ENCODE measurements at regions of chr2 and their contacts with region 1.

Region 1: DNA sequence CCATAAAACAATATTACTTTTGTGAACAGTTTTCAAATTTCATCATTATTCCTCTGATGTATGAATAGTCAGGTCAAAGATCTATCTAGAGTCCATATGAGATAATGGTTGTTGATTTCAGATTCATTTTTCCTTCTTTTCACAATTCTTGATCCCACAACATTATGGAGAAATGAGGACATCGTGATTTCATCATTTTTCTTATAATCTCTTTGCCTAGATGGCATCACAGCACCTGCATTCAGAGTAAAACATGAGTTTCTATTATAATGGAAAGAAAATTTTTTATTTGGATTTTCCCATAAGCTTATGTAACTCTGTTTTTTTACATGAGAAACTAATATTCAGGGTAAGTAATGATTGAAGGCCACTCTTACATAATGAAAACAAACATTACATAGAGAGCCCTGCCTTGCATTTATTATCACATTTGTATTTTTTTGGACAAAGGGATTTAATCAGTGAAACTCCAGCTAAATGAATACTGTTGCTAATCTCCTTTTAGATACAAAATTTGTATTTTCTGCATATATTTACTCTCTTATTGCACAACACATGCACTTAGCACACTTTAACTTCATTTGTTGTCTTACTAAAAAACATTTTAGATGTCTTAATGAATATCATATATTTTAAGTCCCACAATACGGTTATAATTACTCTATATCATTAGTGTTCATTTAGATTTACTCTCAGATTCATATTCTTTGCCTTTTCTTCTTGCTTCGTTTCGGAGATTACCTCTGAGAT is 188.4 kb upstream of the KYNU start:
- DNase-seq: no peak
- ATAC-seq: no peak

Region 2: GRCh38 chr2:142649581-142649980 is 39.5 kb before region 1 on chr2:
- intact Hi-C with region 1: no loop called
- DNase-seq: no peak
- ATAC-seq: no peak

Region 3: GRCh38 chr2:142974288-142975024 is 285.4 kb after region 1 on chr2:
- intact Hi-C with region 1: loop called (anchors 5 kb)
- DNase-seq: no peak
- ATAC-seq: no peak

Measured in left ventricle myocardium superior (tissue), 1 donor.